H1 (cell line): ENCODE measurements at regions of chr12 and their contacts with region 1.

Region 1: GRCh38 chr12:125533434-125534029 is 468.3 kb downstream of the AACS start:
- DNase-seq: peak; percentile 50 to 90
- H3K4me3 ChIP-seq: peak overlapping the region in 1 of 4 experiments; percentile 24; a peak in 1 of 8 replicates
- H3K27ac ChIP-seq: no peak overlapping the region
- H3K4me1 ChIP-seq: peaks cover 0 to 2% (median 1%) of the 10 kb centered on the region in 4 experiments; a peak in 2 of 7 replicates
- H3K27me3 ChIP-seq: no peaks in the 10 kb centered on the region
- CTCF ChIP-seq: peak; percentile 70 to 78 (median 76)
- EP300 ChIP-seq: no peak
- POLR2A ChIP-seq: no peak
- RAD21 ChIP-seq: peak; percentile 83 to 85

Region 2: GRCh38 chr12:125674554-125675338 is 141.2 kb after region 1 on chr12:
- CTCF ChIA-PET with region 1: interaction called, 11 read pairs
- POLR2A ChIA-PET with region 1: no interaction called
- DNase-seq: no peak
- H3K4me3 ChIP-seq: no peak overlapping the region
- H3K27ac ChIP-seq: no peak overlapping the region
- H3K4me1 ChIP-seq: no peaks in the 10 kb centered on the region
- H3K27me3 ChIP-seq: no peaks in the 10 kb centered on the region
- CTCF ChIP-seq: no peak
- EP300 ChIP-seq: no peak
- POLR2A ChIP-seq: no peak
- RAD21 ChIP-seq: no peak

Region 3: DNA sequence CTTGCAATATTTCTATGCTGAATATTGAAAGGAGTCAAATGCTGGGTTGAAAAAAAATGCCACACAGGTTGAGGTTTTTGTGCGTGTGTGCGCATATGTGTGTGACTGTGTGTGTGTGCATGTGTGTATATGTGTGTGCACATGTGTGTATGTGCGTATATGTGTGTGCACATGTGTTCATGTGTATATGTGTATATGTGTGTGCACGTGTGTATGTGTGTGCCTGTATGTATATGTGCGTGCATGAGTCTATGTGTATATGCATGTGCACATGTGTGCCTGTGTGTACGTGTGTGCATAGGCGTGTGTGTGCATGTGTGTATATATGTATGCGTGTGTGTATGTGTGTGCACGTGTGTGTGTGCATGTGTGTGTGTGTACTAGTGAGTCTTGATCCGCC is 187.4 kb after region 1 on chr12:
- CTCF ChIA-PET with region 1: no interaction called
- POLR2A ChIA-PET with region 1: no interaction called
- DNase-seq: no peak
- H3K4me3 ChIP-seq: no peak overlapping the region
- H3K27ac ChIP-seq: no peak overlapping the region
- H3K4me1 ChIP-seq: no peaks in the 10 kb centered on the region
- H3K27me3 ChIP-seq: no peaks in the 10 kb centered on the region
- CTCF ChIP-seq: no peak
- EP300 ChIP-seq: no peak
- POLR2A ChIP-seq: no peak
- RAD21 ChIP-seq: no peak